Activated CD4-positive, alpha-beta T cell treated with anti-CD3 and anti-CD28 coated beads, Interleukin-2, amount 10 ng/mL, durations not matched to agents 24 days and 14 days (primary cell): ENCODE measurements at regions of chr9 and their contacts with region 1.

Region 1: DNA sequence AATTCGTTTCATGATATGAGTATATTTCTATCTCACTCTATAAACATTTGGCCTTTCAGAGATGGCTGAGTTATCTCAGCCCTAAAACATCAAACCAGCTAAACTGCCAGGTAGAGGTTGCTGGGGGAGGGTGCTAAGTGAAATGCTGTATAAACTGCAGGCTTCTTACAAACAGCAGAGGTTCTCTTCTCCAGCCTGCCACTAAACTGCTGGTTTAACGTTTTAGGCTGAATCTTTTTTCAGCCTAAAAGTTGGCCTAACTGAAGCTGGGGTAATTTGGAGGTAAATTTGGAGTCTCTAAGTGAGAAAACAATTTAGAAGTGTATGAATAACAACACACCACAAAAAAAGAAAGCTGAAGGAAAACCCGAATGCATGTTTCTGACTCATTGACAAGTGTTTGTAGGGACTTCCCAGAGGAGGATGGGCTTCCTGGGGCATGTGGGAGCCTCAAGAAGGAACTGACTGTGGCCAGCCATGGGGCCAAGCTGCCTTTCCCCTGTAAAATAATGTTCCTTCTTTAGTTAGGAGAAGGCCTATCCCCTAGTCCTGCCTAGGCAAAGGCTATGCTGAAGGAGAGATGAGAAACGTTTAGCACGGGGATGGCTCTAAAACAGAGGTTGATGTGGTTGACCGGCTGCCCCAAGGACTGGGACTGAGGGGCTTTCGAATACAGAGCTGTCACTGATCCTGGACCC is 44.3 kb downstream of the SLC28A3 start:
- DNase-seq: peak; percentile 87
- H3K4me3 Mint-ChIP-seq: peak overlapping the region; percentile 63
- H3K27ac Mint-ChIP-seq: peak overlapping the region; percentile 100
- H3K4me1 Mint-ChIP-seq: peaks cover 62% of the 10 kb centered on the region
- H3K27me3 Mint-ChIP-seq: no peaks in the 10 kb centered on the region

Region 2: DNA sequence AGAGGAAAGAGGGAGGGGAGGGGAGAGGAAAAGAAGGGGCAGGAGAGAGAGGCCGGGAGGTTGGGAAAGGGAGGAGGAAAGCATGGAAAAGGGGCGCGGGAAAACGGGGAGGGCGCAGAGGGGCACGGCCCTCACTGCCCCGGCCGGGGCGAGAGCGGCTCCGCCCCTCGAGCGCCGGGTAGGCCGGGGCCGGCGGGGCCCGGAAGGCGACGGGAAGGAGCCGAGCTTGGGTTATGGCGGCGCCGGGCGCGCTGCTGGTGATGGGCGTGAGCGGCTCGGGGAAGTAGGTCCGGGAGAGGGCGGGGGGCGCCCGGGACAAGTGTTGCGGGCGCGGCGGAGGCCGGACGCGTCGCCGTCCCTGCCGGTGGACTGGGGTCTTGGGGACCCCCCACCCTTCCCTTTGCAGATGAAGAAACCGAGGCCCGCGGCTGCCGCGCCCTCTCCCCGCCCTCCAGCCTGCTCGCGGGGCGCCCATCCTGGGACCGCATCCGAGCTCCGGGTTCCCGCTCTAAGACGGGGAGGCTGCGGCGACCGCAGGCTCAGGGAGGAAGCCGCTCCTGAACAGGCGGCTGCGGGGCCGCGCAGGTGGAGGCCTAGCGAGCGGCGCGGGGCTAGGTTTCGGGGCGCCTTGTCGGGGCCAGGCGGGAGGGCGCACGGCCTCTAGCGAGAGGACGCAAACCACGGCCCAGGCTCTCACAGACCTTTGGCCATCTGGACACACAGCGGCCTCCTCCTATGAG is 673.2 kb before region 1 on chr9 and contains the start of gene IDNK:
- intact Hi-C with region 1: loop called (anchors 10 kb)
- DNase-seq: peak; percentile 92
- H3K4me3 Mint-ChIP-seq: peak within 1 kb of the TSS; percentile 79
- H3K27ac Mint-ChIP-seq: peak within 1 kb of the TSS; percentile 95
- H3K4me1 Mint-ChIP-seq: peaks cover 23% of the 10 kb centered on the region
- H3K27me3 Mint-ChIP-seq: peaks cover 7% of the 10 kb centered on the region
- total RNA-seq, gene IDNK: 4.5 and 5.1 TPM in 2 replicates

Region 3: GRCh38 chr9:83920927-83921707 is 375.2 kb before region 1 on chr9 and contains the start of gene KIF27:
- intact Hi-C with region 1: loop called (anchors 2 kb)
- DNase-seq: peak; percentile 100
- H3K4me3 Mint-ChIP-seq: peak within 1 kb of the TSS; percentile 87
- H3K27ac Mint-ChIP-seq: peak within 1 kb of the TSS; percentile 93
- H3K4me1 Mint-ChIP-seq: peaks cover 11% of the 10 kb centered on the region
- H3K27me3 Mint-ChIP-seq: no peaks in the 10 kb centered on the region
- total RNA-seq, gene KIF27: 2.4 and 2.7 TPM in 2 replicates

Region 4: DNA sequence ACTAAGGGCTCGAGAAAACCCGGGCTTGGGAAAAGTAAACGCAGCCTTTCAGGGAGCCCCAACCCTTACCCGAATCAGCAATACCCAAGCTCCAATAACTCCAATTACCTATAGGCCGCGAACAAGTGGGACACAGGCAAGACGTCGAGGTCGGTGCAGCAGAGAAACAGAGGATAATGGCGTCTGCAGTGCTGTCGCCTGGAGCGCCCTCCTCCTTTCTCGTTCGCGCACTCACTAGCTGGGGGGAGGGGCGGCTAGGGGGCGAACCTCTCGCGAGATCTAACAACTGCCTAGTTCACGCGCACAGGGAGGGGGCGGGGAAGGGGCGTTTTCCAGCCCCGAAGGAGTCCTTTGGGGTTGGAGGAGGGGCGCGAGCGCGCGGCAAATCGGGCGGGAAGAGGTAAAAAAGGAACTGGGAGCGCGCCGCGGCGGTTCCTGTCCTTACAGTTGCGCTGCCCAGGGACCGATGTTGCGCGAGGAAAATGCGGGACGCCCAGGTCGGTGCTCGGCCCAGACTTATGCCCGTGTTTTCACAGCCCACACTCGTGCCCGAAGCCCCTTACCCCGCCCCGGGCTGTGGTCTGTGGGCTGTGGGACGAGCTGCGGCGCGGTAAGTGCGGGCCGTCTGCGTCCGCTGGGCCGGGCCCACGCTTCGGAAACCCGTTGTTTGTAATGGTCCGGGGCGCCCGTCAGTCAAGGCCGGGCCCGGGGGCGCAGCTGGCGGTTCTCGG is 315.7 kb before region 1 on chr9 and contains the start of gene RMI1:
- intact Hi-C with region 1: loop called (anchors 1 kb)
- DNase-seq: peak; percentile 99
- H3K4me3 Mint-ChIP-seq: peak within 1 kb of the TSS; percentile 94
- H3K27ac Mint-ChIP-seq: peak within 1 kb of the TSS; percentile 98
- H3K4me1 Mint-ChIP-seq: peaks cover 32% of the 10 kb centered on the region
- H3K27me3 Mint-ChIP-seq: no peaks in the 10 kb centered on the region
- total RNA-seq, gene RMI1: 28.9 and 29.3 TPM in 2 replicates

Region 5: DNA sequence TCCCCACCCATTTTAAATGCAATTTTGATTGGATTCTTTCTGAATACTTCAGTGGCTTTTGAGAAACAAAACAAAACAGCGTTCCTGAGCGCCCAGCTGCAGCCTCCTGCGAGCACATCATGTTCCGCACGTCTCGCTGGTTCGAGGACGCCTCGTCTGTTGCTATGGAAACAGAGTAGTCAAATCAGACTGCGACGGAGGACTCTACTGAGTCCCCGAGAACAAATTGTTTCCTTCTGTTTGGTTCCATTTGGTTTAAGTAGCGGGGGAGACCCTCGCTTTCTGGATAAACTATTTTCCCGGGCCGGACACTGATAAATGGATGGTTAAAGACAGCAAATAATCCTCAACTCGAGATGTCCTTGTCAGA is 24.8 kb before region 1 on chr9:
- intact Hi-C with region 1: loop called (anchors 1 kb)
- DNase-seq: peak; percentile 91
- H3K4me3 Mint-ChIP-seq: peak overlapping the region; percentile 82
- H3K27ac Mint-ChIP-seq: peak overlapping the region; percentile 89
- H3K4me1 Mint-ChIP-seq: peaks cover 25% of the 10 kb centered on the region
- H3K27me3 Mint-ChIP-seq: no peaks in the 10 kb centered on the region

Region 6: DNA sequence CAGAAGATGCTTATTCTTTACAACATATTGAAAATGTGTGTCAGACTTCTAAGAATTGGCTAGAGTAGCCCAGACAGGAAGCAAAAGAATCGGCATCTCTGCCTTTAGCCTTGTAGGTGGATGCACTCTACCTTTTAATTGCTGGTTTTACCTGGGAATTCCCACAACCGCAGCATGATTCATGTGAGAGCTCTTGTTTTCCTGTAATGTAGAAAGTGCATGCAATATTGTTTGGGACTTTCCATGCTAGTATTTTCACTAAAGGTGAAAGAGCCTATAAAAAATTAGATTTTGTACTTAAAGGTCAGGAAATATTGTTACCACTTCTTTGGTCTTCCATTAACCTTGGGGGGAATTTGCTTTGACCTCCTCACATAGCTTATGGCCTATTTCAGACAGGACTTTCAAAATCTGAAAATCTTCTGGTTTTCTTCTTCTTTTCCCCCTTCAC is 463.0 kb after region 1 on chr9:
- intact Hi-C with region 1: loop called (anchors 10 kb)
- DNase-seq: peak; percentile 82
- H3K4me3 Mint-ChIP-seq: peak overlapping the region; percentile 60
- H3K27ac Mint-ChIP-seq: peak overlapping the region; percentile 85
- H3K4me1 Mint-ChIP-seq: peaks cover 37% of the 10 kb centered on the region
- H3K27me3 Mint-ChIP-seq: no peaks in the 10 kb centered on the region

Region 7: GRCh38 chr9:85940832-85941621 is 1644.7 kb after region 1 on chr9 and contains the start of gene NAA35:
- intact Hi-C with region 1: loop called (anchors 10 kb)
- DNase-seq: peak; percentile 100
- H3K4me3 Mint-ChIP-seq: no peak within 1 kb of the TSS
- H3K27ac Mint-ChIP-seq: peak within 1 kb of the TSS; percentile 92
- H3K4me1 Mint-ChIP-seq: peaks cover 11% of the 10 kb centered on the region
- H3K27me3 Mint-ChIP-seq: no peaks in the 10 kb centered on the region
- total RNA-seq, gene NAA35: 28.0 and 29.6 TPM in 2 replicates